Tibial artery (tissue), 4 donors: ENCODE measurements at regions of chr12 and their contacts with region 1.

Region 1: DNA sequence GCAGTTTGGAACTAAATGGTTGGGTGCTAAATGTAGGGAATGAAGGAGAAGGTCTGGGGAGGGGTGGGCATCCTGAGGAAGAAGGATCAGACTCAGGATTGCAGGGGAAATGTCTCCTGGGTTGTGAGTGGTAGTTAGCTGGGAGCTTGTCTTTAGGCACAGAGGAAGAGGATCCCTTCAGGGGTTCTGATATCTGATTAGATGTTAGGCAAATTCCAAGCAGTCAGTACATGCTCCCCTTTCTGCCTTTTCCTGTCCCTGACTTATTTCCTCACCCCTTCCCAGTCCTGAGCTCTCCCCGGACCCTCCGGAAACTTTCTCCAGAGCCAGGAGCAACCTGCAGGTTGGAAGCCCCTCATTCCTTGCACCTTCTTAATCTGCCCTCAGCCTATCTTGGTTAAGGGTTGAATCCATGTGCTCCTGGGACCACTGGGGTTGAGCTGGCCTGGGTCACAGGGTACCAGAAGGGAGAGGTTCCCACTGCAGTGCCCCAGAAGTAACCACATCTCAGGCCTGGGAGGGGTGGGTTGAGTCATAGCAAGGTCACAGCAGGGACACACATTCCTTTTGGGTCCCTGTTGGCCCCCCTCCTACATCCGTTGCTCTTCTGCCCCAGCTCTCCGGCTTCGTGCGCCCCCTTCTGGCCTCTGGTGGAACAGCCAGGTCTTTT is 1.6 kb downstream of the IGFBP6 start:
- DNase-seq: peak; percentile 96
- H3K4me3 ChIP-seq: peak overlapping the region; percentile 80 to 83
- H3K27ac ChIP-seq: peak overlapping the region; percentile 94 to 97
- H3K4me1 ChIP-seq: peaks cover 0 to 50% (median 25%) of the 10 kb centered on the region in 4 donors
- H3K27me3 ChIP-seq: no peaks in the 10 kb centered on the region
- CTCF ChIP-seq: peak; percentile 93 to 96

Region 2: DNA sequence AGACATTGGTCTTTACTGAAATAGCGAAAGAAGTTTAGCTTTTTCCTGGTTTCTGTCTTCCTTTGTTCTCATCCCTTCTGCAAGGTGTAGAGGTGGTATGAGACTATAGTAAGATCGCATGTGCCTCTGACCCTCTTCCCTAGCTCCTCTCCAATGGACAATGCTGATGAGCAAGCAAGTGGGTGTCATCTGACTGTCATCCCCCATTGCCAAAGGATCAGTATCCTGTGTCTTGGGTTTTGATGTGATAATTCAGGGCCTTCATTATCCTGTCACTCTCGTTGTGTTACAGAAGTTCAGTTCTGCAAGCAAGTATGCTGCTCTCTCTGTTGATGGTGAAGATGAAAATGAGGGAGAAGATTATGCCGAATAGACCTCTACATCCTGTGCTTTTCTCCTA is 59.3 kb before region 1 on chr12:
- intact Hi-C with region 1: loop called (anchors 2 kb)
- DNase-seq: no peak
- H3K4me3 ChIP-seq: no peak overlapping the region
- H3K27ac ChIP-seq: peak overlapping the region in 1 of 2 donors; percentile 55
- H3K4me1 ChIP-seq: peaks cover 0 to 41% (median 30%) of the 10 kb centered on the region in 4 donors
- H3K27me3 ChIP-seq: no peaks in the 10 kb centered on the region
- CTCF ChIP-seq: no peak